GM10248 (cell line): ENCODE measurements at regions of chr14 and their contacts with region 1.

Region 1: DNA sequence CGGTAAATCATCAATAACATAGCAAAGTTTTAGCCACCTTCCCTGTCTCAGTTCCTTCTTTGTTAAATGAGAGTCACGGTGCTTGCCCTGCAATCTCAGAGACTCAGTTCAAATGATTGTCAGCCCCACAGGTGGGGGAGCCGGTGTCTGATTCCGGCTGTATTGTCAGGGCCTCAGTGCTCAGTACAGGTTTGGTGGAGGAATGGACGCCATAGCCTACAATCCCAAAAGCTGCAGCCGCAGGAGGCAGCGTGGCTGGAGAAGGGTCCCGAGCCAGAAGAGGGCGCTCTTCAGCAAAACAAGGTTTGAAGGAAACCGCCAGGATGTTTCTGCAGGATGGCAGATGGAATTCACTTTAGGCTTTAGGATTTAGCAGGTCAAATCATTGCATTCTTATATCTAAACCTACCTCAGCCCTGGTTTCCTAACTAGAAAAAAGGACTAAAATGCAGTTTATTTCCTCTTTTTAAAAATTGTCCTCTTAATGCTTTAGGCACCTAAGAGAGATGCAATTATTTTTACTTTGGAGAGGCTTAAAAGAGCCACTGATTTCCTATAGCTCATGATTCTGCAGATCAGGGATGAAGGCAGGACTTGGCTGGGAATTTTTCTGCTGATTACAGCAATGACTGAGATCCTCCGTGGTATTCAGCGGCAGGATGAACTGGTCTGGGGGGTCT is 29.2 kb downstream of the FOS start:
- DNase-seq: peak; percentile 59
- CTCF ChIP-seq: peak; percentile 87

Region 2: GRCh38 chr14:75126679-75127473 is 181.0 kb before region 1 on chr14 and contains the start of gene NEK9:
- CTCF ChIA-PET with region 1: interaction called, 102 read pairs
- POLR2A ChIA-PET with region 1: interaction called, 3 read pairs
- DNase-seq: peak; percentile 94
- CTCF ChIP-seq: no peak

Region 3: GRCh38 chr14:75141967-75142366 is 165.9 kb before region 1 on chr14:
- CTCF ChIA-PET with region 1: interaction called, 25 read pairs
- POLR2A ChIA-PET with region 1: no interaction called
- DNase-seq: no peak
- CTCF ChIP-seq: peak; percentile 36

Region 4: DNA sequence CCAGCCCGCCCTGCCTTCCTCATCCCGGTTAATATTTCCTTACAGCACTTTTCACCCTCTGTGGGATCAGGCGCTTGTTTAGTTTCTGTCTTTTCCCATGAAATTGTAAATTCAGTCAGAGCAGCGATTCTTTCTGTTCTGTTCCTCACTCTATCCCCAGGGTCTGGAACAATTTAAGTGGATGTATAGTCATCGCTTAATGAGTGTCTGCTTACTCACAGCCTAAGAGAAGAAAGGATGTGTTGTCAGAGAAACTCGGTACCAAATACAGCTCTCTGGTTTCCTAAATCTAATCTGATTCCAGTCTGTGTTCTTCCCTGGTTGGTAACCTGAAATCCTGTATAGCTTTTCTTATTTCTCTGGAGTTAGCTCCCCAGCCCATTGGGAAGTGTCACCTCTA is 15.7 kb after region 1 on chr14:
- CTCF ChIA-PET with region 1: interaction called, 54 read pairs
- POLR2A ChIA-PET with region 1: no interaction called
- DNase-seq: no peak
- CTCF ChIP-seq: no peak

Region 5: GRCh38 chr14:75527449-75528163 is 219.8 kb after region 1 on chr14:
- CTCF ChIA-PET with region 1: no interaction called
- POLR2A ChIA-PET with region 1: no interaction called
- DNase-seq: no peak
- CTCF ChIP-seq: no peak

Region 6: GRCh38 chr14:75560962-75561432 is 253.2 kb after region 1 on chr14:
- CTCF ChIA-PET with region 1: interaction called, 22 read pairs
- POLR2A ChIA-PET with region 1: no interaction called
- DNase-seq: peak; percentile 61
- CTCF ChIP-seq: peak; percentile 76